ENCODE measurements at regions of chr6 and their contacts with region 1.

Region 1: DNA sequence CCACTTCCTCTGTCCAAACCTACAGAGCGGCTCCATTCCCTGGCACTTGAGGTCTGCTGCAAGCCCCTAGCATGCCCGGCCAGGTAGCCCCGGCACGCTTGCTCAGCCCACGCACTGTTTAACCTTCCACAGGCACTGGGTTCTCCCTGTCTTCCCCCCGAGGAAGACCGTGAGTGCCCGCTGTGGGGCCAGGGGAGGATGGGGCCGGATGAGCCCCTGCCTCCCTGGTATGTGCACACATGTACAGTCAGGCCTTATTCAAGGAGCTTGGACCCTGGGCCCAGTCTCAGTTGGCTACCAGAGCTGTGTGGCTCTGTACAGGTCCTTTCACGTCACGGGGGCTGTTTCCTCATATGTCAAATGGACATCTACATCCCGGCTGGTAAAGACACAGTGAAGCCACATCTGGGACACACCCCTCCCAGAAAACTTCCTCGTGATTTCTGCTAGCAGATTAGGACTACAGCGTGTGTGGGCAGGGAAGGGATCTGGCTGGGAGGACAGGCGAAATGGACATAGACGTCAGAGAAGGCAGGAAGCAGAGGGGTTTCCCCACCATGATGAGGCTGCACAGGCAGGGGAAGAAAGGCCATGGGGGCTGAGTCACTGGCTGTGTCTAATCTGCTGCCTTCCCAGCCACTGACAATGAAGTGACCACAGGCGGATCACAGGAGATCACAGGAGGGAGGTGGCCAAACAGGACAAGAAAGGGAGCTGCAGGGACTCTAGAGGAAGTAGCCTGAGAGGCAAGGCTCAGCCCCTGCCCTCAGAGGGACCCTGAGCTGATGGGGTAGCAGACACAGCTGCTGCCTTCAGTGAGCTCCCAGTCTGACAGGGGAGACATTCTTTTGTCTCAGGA is 62.9 kb downstream of the MRPL14 start:
- DNase-seq: no peak
- ATAC-seq: no peak
- H3K4me3 Mint-ChIP-seq: no peak overlapping the region
- H3K27ac Mint-ChIP-seq: peak overlapping the region; percentile 2; the same call in 1 of the 2 replicates
- H3K4me1 Mint-ChIP-seq: peaks cover 15% of the 10 kb centered on the region
- H3K27me3 Mint-ChIP-seq: no peaks in the 10 kb centered on the region; the same call in 1 of the 2 replicates
- CTCF ChIP-seq: no peak

Region 2: GRCh38 chr6:43910638-43911353 is 153.5 kb before region 1 on chr6:
- CTCF ChIA-PET with region 1: interaction called, 11 read pairs
- POLR2A ChIA-PET with region 1: no interaction called
- DNase-seq: no peak
- ATAC-seq: peak; percentile 9; the same call in 1 of the 2 replicates
- H3K4me3 Mint-ChIP-seq: no peak overlapping the region
- H3K27ac Mint-ChIP-seq: no peak overlapping the region
- H3K4me1 Mint-ChIP-seq: peaks cover 35% of the 10 kb centered on the region
- H3K27me3 Mint-ChIP-seq: no peaks in the 10 kb centered on the region; the same call in 1 of the 2 replicates
- CTCF ChIP-seq: no peak

Region 3: GRCh38 chr6:43964659-43965570 is 99.4 kb before region 1 on chr6:
- CTCF ChIA-PET with region 1: interaction called, 11 read pairs
- POLR2A ChIA-PET with region 1: interaction called, 3 read pairs
- DNase-seq: no peak
- ATAC-seq: peak; percentile 25; the same call in 1 of the 2 replicates
- H3K4me3 Mint-ChIP-seq: no peak overlapping the region
- H3K27ac Mint-ChIP-seq: no peak overlapping the region
- H3K4me1 Mint-ChIP-seq: peaks cover 21% of the 10 kb centered on the region
- H3K27me3 Mint-ChIP-seq: no peaks in the 10 kb centered on the region
- CTCF ChIP-seq: no peak

Region 4: GRCh38 chr6:43990627-43991619 is 73.4 kb before region 1 on chr6:
- CTCF ChIA-PET with region 1: interaction called, 12 read pairs
- POLR2A ChIA-PET with region 1: no interaction called
- DNase-seq: no peak
- ATAC-seq: no peak
- H3K4me3 Mint-ChIP-seq: no peak overlapping the region
- H3K27ac Mint-ChIP-seq: no peak overlapping the region
- H3K4me1 Mint-ChIP-seq: peaks cover 22% of the 10 kb centered on the region
- H3K27me3 Mint-ChIP-seq: no peaks in the 10 kb centered on the region
- CTCF ChIP-seq: no peak

Region 5: GRCh38 chr6:44022296-44022661 is 42.0 kb before region 1 on chr6:
- CTCF ChIA-PET with region 1: interaction called, 11 read pairs
- POLR2A ChIA-PET with region 1: no interaction called
- DNase-seq: no peak
- ATAC-seq: no peak
- H3K4me3 Mint-ChIP-seq: no peak overlapping the region
- H3K27ac Mint-ChIP-seq: no peak overlapping the region
- H3K4me1 Mint-ChIP-seq: no peaks in the 10 kb centered on the region
- H3K27me3 Mint-ChIP-seq: no peaks in the 10 kb centered on the region
- CTCF ChIP-seq: no peak

Region 6: GRCh38 chr6:44052419-44053023 is 11.8 kb before region 1 on chr6:
- CTCF ChIA-PET with region 1: interaction called, 53 read pairs
- POLR2A ChIA-PET with region 1: interaction called, 3 read pairs
- DNase-seq: peak; percentile 60
- ATAC-seq: peak; percentile 82
- H3K4me3 Mint-ChIP-seq: no peak overlapping the region
- H3K27ac Mint-ChIP-seq: peak overlapping the region; percentile 10; the same call in 1 of the 2 replicates
- H3K4me1 Mint-ChIP-seq: peaks cover 25% of the 10 kb centered on the region
- H3K27me3 Mint-ChIP-seq: no peaks in the 10 kb centered on the region
- CTCF ChIP-seq: no peak

Region 7: GRCh38 chr6:44133003-44133931 is 68.9 kb after region 1 on chr6:
- CTCF ChIA-PET with region 1: no interaction called
- POLR2A ChIA-PET with region 1: no interaction called
- DNase-seq: peak; percentile 50
- ATAC-seq: peak; percentile 72
- H3K4me3 Mint-ChIP-seq: peak overlapping the region; percentile 30
- H3K27ac Mint-ChIP-seq: peak overlapping the region; percentile 83; the same call in 1 of the 2 replicates
- H3K4me1 Mint-ChIP-seq: peaks cover 50% of the 10 kb centered on the region
- H3K27me3 Mint-ChIP-seq: no peaks in the 10 kb centered on the region; the same call in 1 of the 2 replicates
- CTCF ChIP-seq: no peak

Measured in WTC11 (cell line).